Calu3 (cell line): ENCODE measurements at regions of chr3 and their contacts with region 1.

Region 1: DNA sequence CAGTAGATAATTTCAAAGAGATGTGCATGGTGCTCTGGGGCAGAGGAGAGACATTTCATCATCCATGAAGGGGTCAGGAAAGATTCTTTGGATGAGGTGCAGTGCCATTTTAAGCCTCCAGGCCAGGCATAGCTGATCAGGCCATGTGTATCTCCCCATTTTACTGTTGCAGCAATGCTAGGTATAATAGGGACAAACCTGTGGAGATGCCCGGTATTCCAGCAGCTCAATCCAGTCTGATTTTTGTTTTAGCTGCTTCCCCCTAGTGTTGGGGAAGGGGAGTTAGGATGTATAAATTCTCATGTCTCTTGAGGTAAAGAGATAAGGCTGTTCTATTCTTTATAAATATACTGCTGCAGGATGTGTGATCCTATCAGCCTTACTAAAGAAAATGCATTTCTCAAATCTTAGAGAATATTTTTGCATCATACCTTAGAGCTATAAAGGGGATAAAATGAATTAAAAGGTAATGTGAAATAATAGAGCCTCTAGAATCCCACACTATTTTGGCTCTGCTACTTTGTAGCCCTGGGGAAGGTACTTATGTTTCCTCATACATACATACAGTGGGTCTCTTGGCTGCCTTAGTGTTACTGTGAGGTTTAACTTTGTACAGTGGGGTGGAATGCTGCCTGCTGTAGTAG is 5.2 kb downstream of the CDV3 start:
- DNase-seq: peak; percentile 51
- H3K4me3 Mint-ChIP-seq: peak overlapping the region; percentile 95
- H3K27ac Mint-ChIP-seq: no peak overlapping the region
- H3K4me1 Mint-ChIP-seq: peaks cover 50% of the 10 kb centered on the region
- H3K27me3 Mint-ChIP-seq: no peaks in the 10 kb centered on the region
- CTCF ChIP-seq: peak; percentile 78

Region 2: GRCh38 chr3:133448478-133449122 is 130.1 kb before region 1 on chr3:
- CTCF ChIA-PET with region 1: interaction called, 13 read pairs
- intact Hi-C with region 1: loop called (anchors 1 kb)
- DNase-seq: no peak
- H3K4me3 Mint-ChIP-seq: no peak overlapping the region
- H3K27ac Mint-ChIP-seq: no peak overlapping the region
- H3K4me1 Mint-ChIP-seq: peaks cover 14% of the 10 kb centered on the region
- H3K27me3 Mint-ChIP-seq: no peaks in the 10 kb centered on the region
- CTCF ChIP-seq: no peak

Region 3: DNA sequence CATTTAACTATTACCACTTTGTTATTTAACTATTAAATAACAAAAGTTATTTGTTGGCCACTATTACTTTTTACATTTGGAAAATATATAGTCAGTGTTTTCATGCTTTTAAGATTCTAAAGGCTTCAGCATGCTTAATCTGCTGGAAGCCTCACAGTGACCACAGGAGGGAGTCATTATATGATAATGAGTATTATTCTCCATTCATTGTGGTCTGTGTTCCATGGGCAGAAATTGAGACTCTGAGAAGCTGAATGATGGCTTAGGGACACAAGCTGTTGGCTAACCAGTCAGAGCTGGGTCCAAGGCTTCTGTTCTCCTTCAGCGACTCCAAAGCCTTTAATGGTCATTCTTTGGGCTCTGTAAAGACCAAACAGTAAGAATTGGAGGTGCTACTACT is 114.1 kb before region 1 on chr3:
- CTCF ChIA-PET with region 1: interaction called, 14 read pairs
- intact Hi-C with region 1: loop called (anchors 1 kb)
- DNase-seq: peak; percentile 21
- H3K4me3 Mint-ChIP-seq: no peak overlapping the region
- H3K27ac Mint-ChIP-seq: no peak overlapping the region
- H3K4me1 Mint-ChIP-seq: peaks cover 23% of the 10 kb centered on the region
- H3K27me3 Mint-ChIP-seq: no peaks in the 10 kb centered on the region
- CTCF ChIP-seq: peak; percentile 22

Region 4: DNA sequence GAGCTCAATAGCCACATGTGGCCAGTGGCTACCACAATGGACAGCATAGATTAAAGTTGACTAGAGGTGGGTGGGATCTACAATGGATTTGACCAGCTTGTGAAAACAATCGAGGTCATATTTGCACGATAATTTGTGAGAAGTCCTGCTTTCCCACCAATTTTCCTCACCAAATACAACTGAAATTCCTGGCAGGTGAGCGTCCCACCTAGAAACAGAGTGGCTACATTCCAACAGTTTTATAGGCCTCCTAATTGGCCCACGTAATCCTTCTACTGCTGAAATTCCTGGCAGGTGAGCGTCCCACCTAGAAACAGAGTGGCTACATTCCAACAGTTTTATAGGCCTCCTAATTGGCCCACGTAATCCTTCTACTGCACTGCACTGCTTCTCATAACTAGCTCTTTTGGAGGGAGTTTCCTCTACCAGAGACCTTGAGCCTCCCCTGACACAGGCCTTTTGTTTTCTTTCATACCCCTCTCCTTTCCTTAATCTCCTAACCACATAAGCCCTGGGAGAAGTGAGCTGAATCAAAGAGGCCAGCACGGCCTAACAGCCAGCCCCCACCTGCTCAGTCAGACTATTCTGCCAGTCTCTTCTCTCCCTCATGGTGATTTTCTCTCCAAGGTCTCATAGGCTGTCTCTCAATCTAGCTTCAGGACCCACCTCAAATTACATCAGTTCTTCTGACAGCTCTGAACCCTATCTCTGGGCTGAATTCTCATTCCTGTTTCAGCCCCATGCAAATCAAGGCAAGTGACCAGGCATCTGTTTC is 98.6 kb before region 1 on chr3:
- CTCF ChIA-PET with region 1: interaction called, 15 read pairs
- intact Hi-C with region 1: loop called (anchors 2 kb)
- DNase-seq: peak; percentile 79
- H3K4me3 Mint-ChIP-seq: peak overlapping the region; percentile 3
- H3K27ac Mint-ChIP-seq: peak overlapping the region; percentile 94
- H3K4me1 Mint-ChIP-seq: peaks cover 16% of the 10 kb centered on the region
- H3K27me3 Mint-ChIP-seq: no peaks in the 10 kb centered on the region
- CTCF ChIP-seq: no peak

Region 5: GRCh38 chr3:133487920-133488540 is 90.6 kb before region 1 on chr3:
- CTCF ChIA-PET with region 1: interaction called, 14 read pairs
- intact Hi-C with region 1: no loop called
- DNase-seq: peak; percentile 62
- H3K4me3 Mint-ChIP-seq: no peak overlapping the region
- H3K27ac Mint-ChIP-seq: no peak overlapping the region
- H3K4me1 Mint-ChIP-seq: peaks cover 19% of the 10 kb centered on the region
- H3K27me3 Mint-ChIP-seq: no peaks in the 10 kb centered on the region
- CTCF ChIP-seq: peak; percentile 61